ENCODE measurements at regions of chr1 and their contacts with region 1.

Region 1: GRCh38 chr1:214584805-214585766 is 17.9 kb upstream of the CENPF start:
- DNase-seq: no peak
- ATAC-seq: peak in 3 of 4 donors; percentile 33 to 71 (median 60)
- H3K4me3 ChIP-seq: no peak overlapping the region
- H3K27ac ChIP-seq: no peak overlapping the region
- H3K4me1 ChIP-seq: peaks cover 33% of the 10 kb centered on the region
- H3K27me3 ChIP-seq: no peaks in the 10 kb centered on the region
- CTCF ChIP-seq: peak; percentile 66

Region 2: GRCh38 chr1:214213136-214213535 is 371.9 kb before region 1 on chr1:
- intact Hi-C with region 1: loop called in 1 of 2 experiments (anchors 10 kb)
- DNase-seq: no peak
- ATAC-seq: no peak
- H3K4me3 ChIP-seq: no peak overlapping the region
- H3K27ac ChIP-seq: no peak overlapping the region
- H3K4me1 ChIP-seq: peaks cover 7% of the 10 kb centered on the region
- H3K27me3 ChIP-seq: peaks cover 0 to 2% (median 0%) of the 10 kb centered on the region in 3 donors
- CTCF ChIP-seq: no peak

Region 3: GRCh38 chr1:214224611-214225354 is 360.3 kb before region 1 on chr1:
- intact Hi-C with region 1: loop called (anchors 10 kb)
- DNase-seq: peak in 1 of 2 donors; percentile 25
- ATAC-seq: peak in 3 of 4 donors; percentile 27 to 41 (median 40)
- H3K4me3 ChIP-seq: peak overlapping the region; percentile 48
- H3K27ac ChIP-seq: peak overlapping the region; percentile 75
- H3K4me1 ChIP-seq: peaks cover 22% of the 10 kb centered on the region
- H3K27me3 ChIP-seq: no peaks in the 10 kb centered on the region
- CTCF ChIP-seq: no peak

Region 4: DNA sequence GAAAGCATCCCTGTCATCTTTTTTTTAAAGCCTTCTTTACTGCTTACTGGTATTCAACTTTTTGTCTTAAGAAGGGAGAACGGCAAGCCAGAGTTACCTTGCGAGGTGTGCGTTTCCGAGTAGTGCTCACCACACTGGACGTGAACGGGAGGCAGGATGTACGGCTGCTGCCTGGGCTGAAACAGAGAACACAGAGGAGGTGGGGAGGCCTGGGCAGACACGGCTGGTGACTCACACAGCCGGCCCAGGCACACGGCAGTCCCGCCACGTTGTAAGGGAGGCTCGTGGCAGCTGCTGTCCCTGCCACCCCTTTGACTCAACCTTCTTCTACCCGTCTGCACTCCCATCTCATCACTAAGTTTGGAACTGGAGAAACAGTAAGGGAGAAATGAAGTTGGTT is 198.3 kb before region 1 on chr1:
- intact Hi-C with region 1: loop called in 1 of 2 experiments (anchors 5 kb)
- DNase-seq: peak; percentile 50 to 65
- ATAC-seq: peak; percentile 76 to 96 (median 94)
- H3K4me3 ChIP-seq: no peak overlapping the region
- H3K27ac ChIP-seq: peak overlapping the region; percentile 44
- H3K4me1 ChIP-seq: no peaks in the 10 kb centered on the region
- H3K27me3 ChIP-seq: no peaks in the 10 kb centered on the region
- CTCF ChIP-seq: no peak

Region 5: GRCh38 chr1:214566158-214567104 is 18.7 kb before region 1 on chr1:
- intact Hi-C with region 1: no loop called
- DNase-seq: no peak
- ATAC-seq: no peak
- H3K4me3 ChIP-seq: no peak overlapping the region
- H3K27ac ChIP-seq: no peak overlapping the region
- H3K4me1 ChIP-seq: no peaks in the 10 kb centered on the region
- H3K27me3 ChIP-seq: no peaks in the 10 kb centered on the region
- CTCF ChIP-seq: no peak

Region 6: GRCh38 chr1:214801191-214801590 is 216.1 kb after region 1 on chr1:
- intact Hi-C with region 1: no loop called
- DNase-seq: no peak
- ATAC-seq: no peak
- H3K4me3 ChIP-seq: no peak overlapping the region
- H3K27ac ChIP-seq: no peak overlapping the region
- H3K4me1 ChIP-seq: no peaks in the 10 kb centered on the region
- H3K27me3 ChIP-seq: no peaks in the 10 kb centered on the region
- CTCF ChIP-seq: no peak